ENCODE measurements at regions of chr3 and their contacts with region 1.

Region 1: GRCh38 chr3:19348929-19349564 is 200.7 kb downstream of the KCNH8 start:
- DNase-seq: peak; percentile 41
- H3K4me3 Mint-ChIP-seq: no peak overlapping the region
- H3K27ac Mint-ChIP-seq: no peak overlapping the region
- H3K4me1 Mint-ChIP-seq: no peaks in the 10 kb centered on the region
- H3K27me3 Mint-ChIP-seq: peaks cover 65% of the 10 kb centered on the region
- CTCF ChIP-seq: peak; percentile 82

Region 2: DNA sequence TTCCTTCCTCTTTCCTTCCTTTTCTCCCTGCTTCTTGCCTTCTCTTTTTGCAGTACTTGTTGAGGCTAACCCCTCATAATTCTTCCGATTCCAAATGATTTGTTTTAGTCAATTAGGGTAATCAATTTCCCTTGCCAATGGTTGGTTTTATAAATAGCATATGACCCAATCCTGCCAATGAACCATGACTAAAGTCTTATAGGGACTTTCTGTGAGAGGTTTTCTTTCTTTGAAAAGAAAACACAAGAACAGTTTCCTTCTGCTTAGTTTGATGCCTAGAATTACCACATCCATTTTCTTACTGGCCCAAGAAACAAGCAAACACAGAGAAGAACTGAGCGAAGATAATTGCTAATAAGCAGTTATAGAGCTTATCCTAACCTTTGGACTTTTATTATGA is 631.4 kb before region 1 on chr3:
- CTCF ChIA-PET with region 1: no interaction called
- POLR2A ChIA-PET with region 1: no interaction called
- intact Hi-C with region 1: no loop called
- DNase-seq: no peak
- H3K4me3 Mint-ChIP-seq: no peak overlapping the region
- H3K27ac Mint-ChIP-seq: no peak overlapping the region
- H3K4me1 Mint-ChIP-seq: no peaks in the 10 kb centered on the region
- H3K27me3 Mint-ChIP-seq: no peaks in the 10 kb centered on the region
- CTCF ChIP-seq: no peak

Region 3: GRCh38 chr3:19046440-19046839 is 302.6 kb before region 1 on chr3:
- CTCF ChIA-PET with region 1: interaction called, 4 read pairs
- POLR2A ChIA-PET with region 1: no interaction called
- intact Hi-C with region 1: loop called (anchors 5 kb)
- DNase-seq: peak; percentile 13
- H3K4me3 Mint-ChIP-seq: no peak overlapping the region
- H3K27ac Mint-ChIP-seq: no peak overlapping the region
- H3K4me1 Mint-ChIP-seq: no peaks in the 10 kb centered on the region
- H3K27me3 Mint-ChIP-seq: peaks cover 7% of the 10 kb centered on the region
- CTCF ChIP-seq: peak; percentile 21

Region 4: DNA sequence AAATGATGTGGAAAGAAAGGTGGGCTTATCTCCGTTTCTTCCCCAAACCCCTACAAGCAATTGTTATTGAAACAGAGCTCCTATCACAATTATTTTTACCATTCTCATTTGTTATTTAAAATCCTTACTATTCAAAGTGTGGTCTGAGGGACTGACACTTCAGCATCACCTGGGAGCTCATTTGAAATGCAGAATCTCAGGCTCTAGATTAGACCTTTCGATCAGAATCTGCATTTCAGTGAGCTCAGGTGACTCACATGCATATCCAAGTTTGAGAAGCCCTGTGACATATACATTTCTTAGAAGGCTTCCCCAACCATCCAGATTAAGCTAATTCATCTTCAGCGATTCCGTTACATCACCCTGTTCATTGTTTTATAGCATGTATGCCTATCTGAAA is 55.8 kb before region 1 on chr3:
- CTCF ChIA-PET with region 1: no interaction called
- POLR2A ChIA-PET with region 1: no interaction called
- intact Hi-C with region 1: no loop called
- DNase-seq: no peak
- H3K4me3 Mint-ChIP-seq: no peak overlapping the region
- H3K27ac Mint-ChIP-seq: no peak overlapping the region
- H3K4me1 Mint-ChIP-seq: no peaks in the 10 kb centered on the region
- H3K27me3 Mint-ChIP-seq: no peaks in the 10 kb centered on the region
- CTCF ChIP-seq: no peak

Measured in MCF 10A (cell line).